ENCODE measurements at regions of chr15 and their contacts with region 1.

Region 1: DNA sequence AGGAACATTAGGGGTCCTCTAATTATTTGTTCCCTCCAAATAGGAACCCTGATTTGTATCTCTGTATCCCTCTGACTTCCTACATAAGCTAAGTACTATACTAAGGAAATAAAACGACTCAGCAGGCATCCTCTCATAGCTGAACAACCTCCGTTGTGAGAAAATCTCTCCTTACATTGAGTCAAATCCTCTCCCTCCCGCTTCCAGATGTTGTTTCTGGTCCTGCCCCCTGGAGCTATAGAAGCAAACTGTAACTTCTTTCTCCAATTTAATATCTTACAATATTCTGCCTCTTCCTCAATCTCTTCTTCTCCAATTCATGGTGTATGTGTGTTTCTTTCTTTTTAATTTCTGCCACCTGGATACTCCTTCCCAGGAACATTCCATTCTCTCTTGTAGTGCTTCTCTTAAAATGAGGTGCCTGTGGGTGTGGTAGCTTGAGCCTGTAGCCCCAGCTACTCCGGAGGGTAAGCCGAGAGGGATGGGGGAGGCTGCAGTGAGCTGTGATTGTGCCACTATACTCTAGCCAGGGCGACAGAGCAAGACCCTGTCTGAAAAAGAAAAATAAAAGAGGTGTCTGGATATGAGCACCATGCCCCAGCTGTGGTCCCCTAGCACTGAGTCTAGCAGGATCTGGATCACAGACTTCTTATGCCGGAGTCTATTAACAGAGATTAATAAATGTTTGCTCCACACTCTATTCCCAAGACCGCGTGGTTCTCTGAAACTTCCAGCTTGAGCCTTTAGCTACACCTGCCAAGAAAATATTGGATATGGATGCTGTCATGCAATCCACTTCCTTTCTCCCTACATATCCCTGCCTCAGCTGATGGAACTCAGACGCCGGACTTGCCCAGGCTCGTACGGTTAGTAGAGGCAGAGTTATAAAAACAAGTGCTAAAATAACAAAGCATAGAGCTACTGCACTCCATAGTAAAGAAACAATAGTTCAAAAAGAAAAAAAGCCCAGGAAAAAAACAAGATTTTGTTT is 42.9 kb upstream of the NEO1 start:
- DNase-seq: peak; percentile 65
- H3K4me3 Mint-ChIP-seq: no peak overlapping the region
- H3K27ac Mint-ChIP-seq: no peak overlapping the region
- H3K4me1 Mint-ChIP-seq: peaks cover 3% of the 10 kb centered on the region
- H3K27me3 Mint-ChIP-seq: no peaks in the 10 kb centered on the region
- CTCF ChIP-seq: no peak

Region 2: DNA sequence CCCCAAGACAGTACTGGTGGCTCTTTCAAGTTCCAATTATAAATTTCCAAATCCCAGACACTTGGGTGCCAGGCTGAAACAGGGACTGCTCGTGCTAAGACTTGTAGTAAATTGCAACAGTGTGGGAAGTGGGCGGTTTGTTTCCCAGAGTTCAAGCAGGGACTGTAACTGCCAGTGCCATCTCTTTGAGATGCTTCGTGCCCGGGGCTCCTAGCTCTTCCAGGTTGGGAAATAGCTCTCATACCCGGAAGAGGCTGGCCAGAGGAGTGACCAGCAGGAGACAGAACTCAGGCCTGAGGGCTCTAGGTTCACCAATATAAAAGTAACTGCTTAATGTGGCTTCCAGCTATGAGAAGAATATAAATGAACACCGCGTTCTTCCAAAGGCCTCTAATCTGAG is 11.1 kb before region 1 on chr15:
- CTCF ChIA-PET with region 1: no interaction called
- POLR2A ChIA-PET with region 1: interaction called, 12 read pairs
- intact Hi-C with region 1: no loop called
- DNase-seq: peak; percentile 87
- H3K4me3 Mint-ChIP-seq: no peak overlapping the region
- H3K27ac Mint-ChIP-seq: no peak overlapping the region
- H3K4me1 Mint-ChIP-seq: peaks cover 6% of the 10 kb centered on the region
- H3K27me3 Mint-ChIP-seq: no peaks in the 10 kb centered on the region
- CTCF ChIP-seq: no peak

Region 3: GRCh38 chr15:73822998-73823397 is 813.6 kb after region 1 on chr15:
- CTCF ChIA-PET with region 1: no interaction called
- POLR2A ChIA-PET with region 1: no interaction called
- intact Hi-C with region 1: no loop called
- DNase-seq: peak; percentile 26
- H3K4me3 Mint-ChIP-seq: no peak overlapping the region
- H3K27ac Mint-ChIP-seq: no peak overlapping the region
- H3K4me1 Mint-ChIP-seq: no peaks in the 10 kb centered on the region
- H3K27me3 Mint-ChIP-seq: peaks cover 66% of the 10 kb centered on the region
- CTCF ChIP-seq: no peak

Measured in MCF 10A (cell line).